K562 (cell line): ENCODE measurements at regions of chr17 and their contacts with region 1.

Region 1: DNA sequence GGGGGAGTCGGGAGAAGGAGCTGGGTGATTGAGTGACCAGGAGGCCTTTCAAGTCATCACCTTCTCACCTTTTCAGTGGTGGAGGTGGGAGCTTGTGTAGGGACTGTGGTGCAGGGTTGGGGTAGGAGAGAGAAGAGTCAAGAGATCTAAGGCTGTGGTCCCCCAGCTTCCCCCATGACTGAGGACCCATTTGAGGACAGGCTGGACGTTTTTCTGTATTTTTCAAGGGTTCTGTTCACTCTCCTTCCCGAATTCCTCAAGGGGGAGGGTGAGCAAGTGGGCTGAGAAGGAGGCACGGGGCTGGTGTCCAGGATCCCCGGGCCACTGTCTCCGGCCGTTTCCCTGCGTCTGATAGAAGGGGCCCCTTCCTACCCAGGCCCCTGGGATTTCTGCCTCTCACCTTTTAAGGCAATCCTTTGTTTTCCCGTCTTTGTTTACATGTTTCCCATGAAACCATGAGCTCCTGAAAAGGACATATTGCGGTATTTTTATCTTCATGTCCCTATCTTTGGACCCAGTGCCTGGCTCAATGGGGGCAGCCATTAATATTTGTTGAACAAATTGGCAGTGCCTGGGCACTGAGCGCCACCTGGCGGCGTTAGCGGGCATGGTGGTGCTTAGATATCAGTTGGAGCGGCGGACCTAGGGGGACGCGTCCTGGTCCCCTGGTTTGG is 9.2 kb upstream of the CD300A start:
- DNase-seq: peak; percentile 65 to 83 (median 70)
- ATAC-seq: peak; percentile 33
- H3K4me3 ChIP-seq: no peak overlapping the region
- H3K27ac ChIP-seq: no peak overlapping the region
- H3K4me1 ChIP-seq: peaks cover 15 to 22% of the 10 kb centered on the region in 2 experiments; a peak in 4 of 5 replicates
- H3K27me3 ChIP-seq: peaks cover 0 to 17% of the 10 kb centered on the region in 2 experiments; a peak in 3 of 5 replicates
- CTCF ChIP-seq: peak; percentile 91 to 94 (median 94)
- EP300 ChIP-seq: no peak
- POLR2A ChIP-seq: no peak
- RAD21 ChIP-seq: peak; percentile 100

Region 2: DNA sequence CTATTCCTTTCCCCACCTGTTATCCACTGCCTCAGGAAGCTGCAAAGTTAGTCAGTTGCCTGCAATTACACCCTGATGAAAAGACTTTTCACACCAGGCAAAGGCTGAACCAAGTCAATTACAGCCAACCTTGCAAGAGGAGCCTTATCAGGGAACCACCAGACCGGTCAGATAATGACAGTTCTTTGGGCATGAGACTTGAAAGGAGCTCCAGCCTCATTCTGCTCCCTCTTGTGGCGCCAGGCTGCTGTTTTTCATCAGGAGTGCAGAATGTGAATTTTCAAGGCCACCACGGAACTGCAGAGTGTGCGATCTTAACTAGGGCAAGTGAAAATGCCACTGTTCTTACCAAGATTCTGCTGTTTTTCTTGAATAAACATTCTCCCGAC is 160.7 kb before region 1 on chr17:
- CTCF ChIA-PET with region 1: no interaction called
- POLR2A ChIA-PET with region 1: no interaction called
- in situ Hi-C with region 1: no loop called
- intact Hi-C with region 1: loop called (anchors 1 kb)
- DNase-seq: peak; percentile 82 to 96 (median 85)
- ATAC-seq: peak; percentile 89
- H3K4me3 ChIP-seq: peak overlapping the region; percentile 10; the same call in 1 of the 2 replicates
- H3K27ac ChIP-seq: peak overlapping the region; percentile 91
- H3K4me1 ChIP-seq: peaks cover 14 to 21% of the 10 kb centered on the region in 2 experiments; a peak in 4 of 5 replicates
- H3K27me3 ChIP-seq: no peaks in the 10 kb centered on the region
- CTCF ChIP-seq: peak; percentile 87 to 91 (median 90)
- EP300 ChIP-seq: peak; percentile 81
- POLR2A ChIP-seq: no peak
- RAD21 ChIP-seq: peak; percentile 89 to 92

Region 3: GRCh38 chr17:74325743-74326379 is 131.4 kb before region 1 on chr17 and contains the start of gene KIF19:
- CTCF ChIA-PET with region 1: no interaction called
- POLR2A ChIA-PET with region 1: no interaction called
- in situ Hi-C with region 1: no loop called
- intact Hi-C with region 1: no loop called
- DNase-seq: peak; percentile 44 to 94 (median 88)
- ATAC-seq: peak; percentile 95
- H3K4me3 ChIP-seq: no peak within 1 kb of the TSS
- H3K27ac ChIP-seq: no peak within 1 kb of the TSS
- H3K4me1 ChIP-seq: peaks cover 0 to 23% of the 10 kb centered on the region in 2 experiments; a peak in 3 of 5 replicates
- H3K27me3 ChIP-seq: peaks cover 25 to 40% of the 10 kb centered on the region in 2 experiments
- CTCF ChIP-seq: no peak
- EP300 ChIP-seq: no peak
- POLR2A ChIP-seq: no peak
- RAD21 ChIP-seq: no peak
- polyA plus RNA-seq, gene KIF19: not detected

Region 4: GRCh38 chr17:74368092-74369081 is 88.9 kb before region 1 on chr17:
- CTCF ChIA-PET with region 1: interaction called, 18 read pairs
- POLR2A ChIA-PET with region 1: no interaction called
- in situ Hi-C with region 1: no loop called
- intact Hi-C with region 1: loop called (anchors 2 kb)
- DNase-seq: peak; percentile 79 to 88 (median 88)
- ATAC-seq: peak; percentile 91
- H3K4me3 ChIP-seq: no peak overlapping the region
- H3K27ac ChIP-seq: no peak overlapping the region
- H3K4me1 ChIP-seq: peaks cover 0 to 22% of the 10 kb centered on the region in 2 experiments; a peak in 1 of 5 replicates
- H3K27me3 ChIP-seq: peaks cover 24 to 50% of the 10 kb centered on the region in 2 experiments
- CTCF ChIP-seq: peak; percentile 88 to 92 (median 90)
- EP300 ChIP-seq: no peak
- POLR2A ChIP-seq: no peak
- RAD21 ChIP-seq: peak; percentile 83 to 92

Region 5: DNA sequence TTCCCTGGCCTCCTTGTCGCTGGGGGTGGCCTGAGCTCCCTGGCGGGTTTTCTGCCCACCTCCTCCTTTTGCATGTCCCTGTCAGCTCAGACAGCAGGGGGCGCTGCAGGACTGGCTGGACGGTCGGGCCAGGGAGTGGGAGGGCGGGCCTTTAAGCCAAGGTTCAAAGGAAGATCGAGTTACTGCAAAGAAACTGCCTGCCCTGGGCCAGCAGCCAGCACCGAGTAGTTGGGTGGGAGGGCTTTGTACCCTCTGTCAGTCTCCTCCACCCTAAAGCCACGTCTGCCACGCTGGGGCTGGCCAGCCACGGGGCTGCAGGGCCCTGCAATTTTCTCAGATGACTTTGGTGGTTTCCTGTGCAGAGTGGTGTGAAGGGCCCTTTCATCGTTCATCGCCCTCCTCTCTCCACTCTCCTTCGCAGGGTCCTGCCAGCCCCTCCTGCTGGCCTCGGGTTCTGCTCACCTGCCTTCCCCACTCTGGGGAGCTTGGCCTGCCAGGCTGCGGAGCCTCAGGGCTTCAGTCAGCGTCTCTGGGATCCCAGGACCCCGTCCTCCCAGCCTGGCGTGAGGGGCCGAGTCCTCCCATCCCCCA is 77.7 kb before region 1 on chr17:
- CTCF ChIA-PET with region 1: interaction called, 61 read pairs
- POLR2A ChIA-PET with region 1: no interaction called
- in situ Hi-C with region 1: no loop called
- intact Hi-C with region 1: loop called (anchors 1 kb)
- DNase-seq: peak; percentile 89 to 92 (median 90)
- ATAC-seq: peak; percentile 99
- H3K4me3 ChIP-seq: no peak overlapping the region
- H3K27ac ChIP-seq: no peak overlapping the region
- H3K4me1 ChIP-seq: peaks cover 0 to 10% of the 10 kb centered on the region in 2 experiments; a peak in 4 of 5 replicates
- H3K27me3 ChIP-seq: peaks cover 19 to 53% of the 10 kb centered on the region in 2 experiments
- CTCF ChIP-seq: peak; percentile 91 to 95 (median 95)
- EP300 ChIP-seq: no peak
- POLR2A ChIP-seq: no peak
- RAD21 ChIP-seq: peak; percentile 98 to 99

Region 6: GRCh38 chr17:74408262-74408661 is 49.0 kb before region 1 on chr17:
- CTCF ChIA-PET with region 1: interaction called, 12 read pairs
- POLR2A ChIA-PET with region 1: interaction called, 3 read pairs
- in situ Hi-C with region 1: no loop called
- intact Hi-C with region 1: loop called (anchors 1 kb)
- DNase-seq: peak; percentile 43 to 69 (median 58)
- ATAC-seq: peak; percentile 94
- H3K4me3 ChIP-seq: no peak overlapping the region
- H3K27ac ChIP-seq: no peak overlapping the region
- H3K4me1 ChIP-seq: no peaks in the 10 kb centered on the region
- H3K27me3 ChIP-seq: peaks cover 13 to 39% of the 10 kb centered on the region in 2 experiments; a peak in 4 of 5 replicates
- CTCF ChIP-seq: peak; percentile 54 to 78 (median 58); a peak in 5 of 6 replicates
- EP300 ChIP-seq: no peak
- POLR2A ChIP-seq: no peak
- RAD21 ChIP-seq: peak; percentile 85 to 88

Region 7: GRCh38 chr17:74493381-74493833 is 36.1 kb after region 1 on chr17:
- CTCF ChIA-PET with region 1: interaction called, 3 read pairs
- POLR2A ChIA-PET with region 1: interaction called, 3 read pairs
- in situ Hi-C with region 1: no loop called
- intact Hi-C with region 1: loop called (anchors 1 kb)
- DNase-seq: peak; percentile 63 to 73 (median 66)
- ATAC-seq: peak; percentile 92
- H3K4me3 ChIP-seq: no peak overlapping the region
- H3K27ac ChIP-seq: no peak overlapping the region
- H3K4me1 ChIP-seq: no peaks in the 10 kb centered on the region
- H3K27me3 ChIP-seq: peaks cover 0 to 20% of the 10 kb centered on the region in 2 experiments; a peak in 2 of 5 replicates
- CTCF ChIP-seq: peak; percentile 84 to 92 (median 90)
- EP300 ChIP-seq: no peak
- POLR2A ChIP-seq: no peak
- RAD21 ChIP-seq: peak; percentile 96 to 98